Activated CD8-positive, alpha-beta memory T cell treated with anti-CD3 and anti-CD28 coated beads, Interleukin-2, amount 10 ng/mL, durations not matched to agents 7 days and 5 days (primary cell): ENCODE measurements at regions of chr1 and their contacts with region 1.

Region 1: GRCh38 chr1:225441314-225442122 is 13.7 kb upstream of the LBR start:
- DNase-seq: no peak
- ATAC-seq: no peak
- H3K4me3 Mint-ChIP-seq: no peak overlapping the region
- H3K27ac Mint-ChIP-seq: peak overlapping the region; percentile 82
- H3K4me1 Mint-ChIP-seq: peaks cover 50% of the 10 kb centered on the region
- H3K27me3 Mint-ChIP-seq: no peaks in the 10 kb centered on the region

Region 2: DNA sequence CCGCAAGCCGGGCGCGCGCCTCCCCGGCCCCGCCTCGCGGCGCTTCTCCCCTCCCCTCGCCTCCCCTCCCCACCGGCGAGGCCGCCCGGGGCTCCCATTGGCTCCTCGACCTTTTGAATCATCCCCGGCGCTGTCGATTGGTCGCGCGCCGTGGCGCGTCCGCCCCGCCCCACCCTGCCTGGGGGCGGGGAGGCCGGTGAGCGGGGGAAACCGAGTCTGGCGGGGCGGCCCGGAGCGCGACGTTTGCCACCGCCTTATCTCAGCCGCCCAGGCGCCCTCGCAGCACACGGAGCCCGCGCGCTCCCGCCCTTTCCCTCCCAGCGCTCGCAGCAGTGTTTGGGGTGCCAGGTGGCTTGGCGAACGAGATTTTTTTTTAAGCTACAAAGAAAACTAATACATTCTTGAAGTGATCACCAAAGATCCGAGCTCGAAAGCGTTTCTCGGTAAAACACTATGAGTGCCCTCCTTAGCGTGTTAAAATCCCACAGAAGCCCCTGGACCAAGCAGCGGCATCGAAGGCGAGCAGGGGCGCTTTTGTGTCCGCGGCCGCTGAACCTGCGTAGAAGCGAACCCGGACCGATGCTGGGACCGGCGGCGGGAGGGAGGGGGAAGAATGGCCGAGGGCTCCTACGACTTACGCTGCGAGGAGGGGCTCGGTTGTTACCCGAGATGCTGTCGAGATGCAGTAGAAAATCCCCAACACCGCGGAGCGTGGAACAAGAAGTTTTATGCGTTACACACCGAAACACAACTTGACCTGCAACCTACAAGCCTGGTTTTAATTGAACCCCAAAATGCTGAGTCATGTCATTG is 13.2 kb before region 1 on chr1:
- CTCF ChIA-PET with region 1: interaction called, 101 read pairs
- DNase-seq: peak; percentile 95
- ATAC-seq: peak; percentile 95
- H3K4me3 Mint-ChIP-seq: peak overlapping the region; percentile 96
- H3K27ac Mint-ChIP-seq: peak overlapping the region; percentile 98
- H3K4me1 Mint-ChIP-seq: peaks cover 43% of the 10 kb centered on the region
- H3K27me3 Mint-ChIP-seq: no peaks in the 10 kb centered on the region

Region 3: GRCh38 chr1:225454733-225455132 is 13.2 kb after region 1 on chr1:
- CTCF ChIA-PET with region 1: interaction called, 20 read pairs
- DNase-seq: peak; percentile 80
- ATAC-seq: peak; percentile 91
- H3K4me3 Mint-ChIP-seq: no peak overlapping the region
- H3K27ac Mint-ChIP-seq: peak overlapping the region; percentile 83
- H3K4me1 Mint-ChIP-seq: peaks cover 51% of the 10 kb centered on the region
- H3K27me3 Mint-ChIP-seq: no peaks in the 10 kb centered on the region

Region 4: DNA sequence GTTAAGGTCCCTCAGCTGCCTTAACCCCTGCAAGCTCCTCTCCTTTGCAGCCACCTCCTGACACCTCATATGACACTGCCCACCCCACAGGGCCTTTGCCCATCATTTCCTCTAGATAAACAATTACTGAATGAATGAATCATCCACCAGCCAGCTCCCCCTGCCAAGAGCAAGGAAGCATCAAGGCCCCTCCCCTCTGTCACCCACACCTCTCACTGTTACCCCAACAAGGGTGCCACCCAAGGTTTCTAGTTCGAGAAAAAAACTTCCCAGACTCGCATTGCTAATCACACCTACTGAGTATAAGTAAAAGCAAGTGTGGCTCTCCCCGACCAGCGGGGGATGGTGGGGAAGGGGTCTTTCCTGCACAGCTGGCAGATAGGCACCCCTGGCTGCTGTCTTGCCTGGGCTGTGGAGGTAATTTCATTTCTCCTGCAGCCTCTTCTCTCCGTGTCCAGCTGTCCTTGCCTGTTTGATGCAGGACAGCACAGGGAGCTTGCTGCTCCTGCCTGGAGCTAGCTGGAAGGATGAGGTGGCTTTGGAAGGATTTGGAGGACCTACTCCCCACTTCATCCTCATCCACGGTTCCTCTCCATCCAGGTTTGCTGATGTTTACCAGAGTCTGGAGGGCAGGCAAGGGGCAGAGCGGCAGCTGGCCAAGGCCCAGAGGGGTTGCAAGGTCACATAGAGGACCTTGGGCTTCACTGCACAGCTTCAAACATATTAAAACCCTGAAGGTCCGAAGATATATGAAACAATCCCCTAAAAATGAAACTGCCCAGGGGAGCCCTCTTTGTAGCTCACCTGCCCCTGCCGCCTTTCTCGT is 19.4 kb after region 1 on chr1:
- CTCF ChIA-PET with region 1: interaction called, 20 read pairs
- DNase-seq: peak; percentile 77
- ATAC-seq: peak; percentile 84
- H3K4me3 Mint-ChIP-seq: no peak overlapping the region
- H3K27ac Mint-ChIP-seq: peak overlapping the region; percentile 87
- H3K4me1 Mint-ChIP-seq: peaks cover 58% of the 10 kb centered on the region
- H3K27me3 Mint-ChIP-seq: no peaks in the 10 kb centered on the region

Region 5: GRCh38 chr1:225467193-225468020 is 25.9 kb after region 1 on chr1:
- CTCF ChIA-PET with region 1: interaction called, 26 read pairs
- DNase-seq: peak; percentile 95
- ATAC-seq: peak; percentile 90
- H3K4me3 Mint-ChIP-seq: peak overlapping the region; percentile 84
- H3K27ac Mint-ChIP-seq: peak overlapping the region; percentile 99
- H3K4me1 Mint-ChIP-seq: peaks cover 50% of the 10 kb centered on the region
- H3K27me3 Mint-ChIP-seq: no peaks in the 10 kb centered on the region